SK-N-SH (cell line): ENCODE measurements at regions of chr15 and their contacts with region 1.

Region 1: DNA sequence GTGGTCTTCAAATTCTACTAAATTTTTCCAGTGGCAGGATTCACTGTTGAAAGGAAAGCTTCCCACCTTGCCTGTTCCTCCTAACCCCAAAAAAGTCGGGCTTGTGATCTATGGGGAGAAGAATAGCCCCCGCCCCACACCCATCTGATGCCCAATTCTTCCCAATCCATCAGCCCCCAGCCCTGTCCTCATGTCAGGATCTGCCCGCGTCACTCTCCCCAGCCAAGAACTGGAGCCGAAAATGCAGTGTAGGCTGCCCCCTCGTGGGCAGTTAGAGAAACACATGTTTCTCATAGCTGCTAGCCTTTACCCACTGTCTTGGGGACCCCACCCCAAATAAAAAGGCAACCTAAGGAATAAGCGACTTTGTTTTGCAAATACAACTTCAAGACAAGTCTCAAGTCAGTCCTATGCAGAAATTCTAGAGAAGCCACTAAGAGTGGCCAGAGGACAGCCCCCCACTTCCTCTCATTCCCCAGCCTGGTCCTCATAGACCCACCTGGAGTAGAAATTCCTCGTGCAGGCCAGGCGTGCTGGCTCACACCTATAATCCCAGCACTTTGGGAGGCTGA is 13.0 kb upstream of the CSK start:
- DNase-seq: peak; percentile 84
- H3K4me3 ChIP-seq: no peak overlapping the region; a peak in 1 of 4 replicates
- H3K27ac ChIP-seq: no peak overlapping the region
- H3K4me1 ChIP-seq: peaks cover 0 to 5% of the 10 kb centered on the region in 2 experiments; a peak in 1 of 4 replicates
- H3K27me3 ChIP-seq: peaks cover 8% of the 10 kb centered on the region; the same call in 1 of the 2 replicates
- CTCF ChIP-seq: peak; percentile 87
- EP300 ChIP-seq: no peak
- RAD21 ChIP-seq: peak; percentile 88

Region 2: DNA sequence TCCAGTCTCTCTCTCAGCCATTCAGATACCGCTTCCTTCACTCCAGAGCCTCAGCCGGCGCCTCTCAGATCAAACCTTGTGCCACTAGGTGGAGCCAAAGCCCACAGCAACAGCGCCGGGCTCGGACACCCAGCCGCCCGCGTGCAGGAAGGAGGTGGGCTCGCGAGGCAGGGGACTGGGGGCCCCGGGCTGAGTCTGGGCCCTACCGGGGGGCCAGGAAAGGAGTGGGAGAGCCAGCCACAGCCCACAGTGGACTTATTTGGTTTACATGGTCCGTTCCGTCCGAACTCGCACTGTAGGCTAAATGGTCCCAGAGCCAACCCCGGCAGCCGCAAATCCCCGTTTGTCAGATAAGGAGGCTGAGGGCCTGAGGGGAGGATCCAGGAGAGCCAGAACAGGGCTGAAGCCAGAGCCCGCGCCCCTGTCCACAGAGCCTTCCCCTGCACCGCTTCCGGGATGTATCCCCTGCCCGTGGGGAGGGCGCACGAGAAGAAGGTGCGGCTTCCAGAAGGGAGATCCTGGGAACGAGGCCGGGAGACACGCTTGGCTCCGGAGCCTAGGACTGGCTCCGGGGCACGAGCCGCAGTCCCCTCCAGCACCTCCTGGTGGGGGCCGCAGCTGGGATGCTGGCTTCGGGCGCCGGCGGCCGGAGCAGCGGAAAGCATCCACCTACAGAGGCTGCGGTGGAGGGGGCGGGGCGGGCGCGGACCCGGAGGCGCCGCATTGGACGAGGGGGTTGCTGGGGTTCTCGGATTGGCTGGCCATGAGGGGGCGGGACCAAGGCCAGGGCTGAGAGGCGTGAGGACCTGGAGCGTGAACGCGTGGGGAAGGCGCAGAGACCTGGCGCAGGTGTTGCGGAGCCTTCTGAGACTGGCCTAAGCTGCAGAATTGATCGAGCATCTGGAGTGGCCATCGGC is 394.9 kb before region 1 on chr15:
- CTCF ChIA-PET with region 1: interaction called, 20 read pairs
- POLR2A ChIA-PET with region 1: no interaction called
- DNase-seq: peak; percentile 99
- H3K4me3 ChIP-seq: peak overlapping the region; percentile 67 to 99
- H3K27ac ChIP-seq: peak overlapping the region in 1 of 2 experiments; percentile 93; a peak in 2 of 4 replicates
- H3K4me1 ChIP-seq: peaks cover 0 to 12% of the 10 kb centered on the region in 2 experiments; a peak in 1 of 4 replicates
- H3K27me3 ChIP-seq: peaks cover 30% of the 10 kb centered on the region
- CTCF ChIP-seq: peak; percentile 90
- EP300 ChIP-seq: no peak; a peak in 1 of 4 replicates
- RAD21 ChIP-seq: peak; percentile 93

Region 3: GRCh38 chr15:74695597-74696397 is 73.1 kb before region 1 on chr15 and contains the start of gene EDC3:
- CTCF ChIA-PET with region 1: interaction called, 10 read pairs
- POLR2A ChIA-PET with region 1: no interaction called
- DNase-seq: peak; percentile 92
- H3K4me3 ChIP-seq: peak within 1 kb of the TSS; percentile 91 to 96
- H3K27ac ChIP-seq: peak within 1 kb of the TSS; percentile 61 to 70; a peak in 2 of 4 replicates
- H3K4me1 ChIP-seq: peaks cover 10 to 12% of the 10 kb centered on the region in 2 experiments; a peak in 3 of 4 replicates
- H3K27me3 ChIP-seq: no peaks in the 10 kb centered on the region
- CTCF ChIP-seq: no peak
- EP300 ChIP-seq: no peak
- RAD21 ChIP-seq: no peak
- polyA plus RNA-seq, gene EDC3: 34.9 and 44.5 TPM in 2 replicates

Region 4: GRCh38 chr15:74752491-74753020 is 16.3 kb before region 1 on chr15:
- CTCF ChIA-PET with region 1: interaction called, 30 read pairs
- POLR2A ChIA-PET with region 1: interaction called, 4 read pairs
- DNase-seq: no peak
- H3K4me3 ChIP-seq: no peak overlapping the region
- H3K27ac ChIP-seq: no peak overlapping the region
- H3K4me1 ChIP-seq: no peaks in the 10 kb centered on the region
- H3K27me3 ChIP-seq: no peaks in the 10 kb centered on the region
- CTCF ChIP-seq: no peak
- EP300 ChIP-seq: no peak
- RAD21 ChIP-seq: no peak

Region 5: GRCh38 chr15:74799856-74800547 is 31.1 kb after region 1 on chr15:
- CTCF ChIA-PET with region 1: interaction called, 50 read pairs
- POLR2A ChIA-PET with region 1: no interaction called
- DNase-seq: peak; percentile 94
- H3K4me3 ChIP-seq: peak overlapping the region in 1 of 2 experiments; percentile 43; a peak in 1 of 4 replicates
- H3K27ac ChIP-seq: no peak overlapping the region
- H3K4me1 ChIP-seq: no peaks in the 10 kb centered on the region
- H3K27me3 ChIP-seq: no peaks in the 10 kb centered on the region
- CTCF ChIP-seq: peak; percentile 90
- EP300 ChIP-seq: no peak
- RAD21 ChIP-seq: peak; percentile 74

Region 6: GRCh38 chr15:74842581-74843444 is 74.0 kb after region 1 on chr15 and contains the start of gene ULK3:
- CTCF ChIA-PET with region 1: interaction called, 95 read pairs
- POLR2A ChIA-PET with region 1: no interaction called
- DNase-seq: peak; percentile 99
- H3K4me3 ChIP-seq: peak within 1 kb of the TSS; percentile 98
- H3K27ac ChIP-seq: peak within 1 kb of the TSS; percentile 72 to 88
- H3K4me1 ChIP-seq: peaks cover 0 to 23% of the 10 kb centered on the region in 2 experiments; a peak in 2 of 4 replicates
- H3K27me3 ChIP-seq: no peaks in the 10 kb centered on the region
- CTCF ChIP-seq: peak; percentile 50
- EP300 ChIP-seq: no peak
- RAD21 ChIP-seq: peak; percentile 34; the same call in 1 of the 2 replicates
- polyA plus RNA-seq, gene ULK3: 41.3 and 55.3 TPM in 2 replicates

Region 7: GRCh38 chr15:74956648-74957300 is 187.9 kb after region 1 on chr15 and contains the start of gene RPP25:
- CTCF ChIA-PET with region 1: interaction called, 165 read pairs
- POLR2A ChIA-PET with region 1: interaction called, 5 read pairs
- DNase-seq: peak; percentile 92
- H3K4me3 ChIP-seq: peak within 1 kb of the TSS; percentile 54 to 64
- H3K27ac ChIP-seq: peak within 1 kb of the TSS in 1 of 2 experiments; percentile 98; a peak in 2 of 4 replicates
- H3K4me1 ChIP-seq: peaks cover 0 to 40% of the 10 kb centered on the region in 2 experiments; a peak in 1 of 4 replicates
- H3K27me3 ChIP-seq: no peaks in the 10 kb centered on the region; the same call in 1 of the 2 replicates
- CTCF ChIP-seq: no peak
- EP300 ChIP-seq: no peak
- RAD21 ChIP-seq: no peak
- polyA plus RNA-seq, gene RPP25: 1.7 TPM in 2 replicates